Astrocyte of the cerebellum (primary cell): ENCODE measurements at regions of chr9 and their contacts with region 1.

Region 1: DNA sequence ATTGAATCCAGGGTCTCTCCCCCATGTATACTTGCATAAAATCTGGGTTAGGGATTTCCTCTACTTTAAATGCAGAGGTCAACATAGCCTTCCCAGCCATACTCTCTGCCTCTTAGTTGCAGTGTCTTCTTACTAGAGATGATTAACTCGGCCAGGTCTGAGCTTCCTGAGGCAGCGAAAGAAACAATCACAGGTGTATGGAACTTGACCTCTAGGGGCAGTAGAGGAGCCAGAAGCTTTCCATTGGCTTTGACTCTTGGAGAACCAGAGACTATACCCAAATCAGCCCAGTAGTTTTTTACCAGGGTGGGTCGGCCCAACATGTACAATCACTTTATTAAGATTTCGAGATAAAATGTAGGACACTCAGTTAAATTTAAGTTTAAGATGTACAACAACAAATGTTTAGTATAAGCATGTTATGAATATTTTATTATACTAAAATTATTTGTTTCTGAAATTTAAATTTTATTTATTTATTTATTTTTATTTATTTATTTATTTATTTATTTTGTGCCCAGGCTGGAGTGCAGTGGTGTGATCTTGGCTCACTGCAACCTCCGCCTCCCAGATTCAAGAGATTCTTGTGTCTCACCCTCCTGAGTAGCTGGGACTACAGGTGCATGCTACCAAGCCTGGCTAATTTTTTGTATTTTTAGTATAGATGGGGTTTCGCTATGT is 48.0 kb upstream of the DMRT3 start:
- DNase-seq: no peak
- H3K4me3 ChIP-seq: no peak overlapping the region
- CTCF ChIP-seq: peak; percentile 43

Region 2: DNA sequence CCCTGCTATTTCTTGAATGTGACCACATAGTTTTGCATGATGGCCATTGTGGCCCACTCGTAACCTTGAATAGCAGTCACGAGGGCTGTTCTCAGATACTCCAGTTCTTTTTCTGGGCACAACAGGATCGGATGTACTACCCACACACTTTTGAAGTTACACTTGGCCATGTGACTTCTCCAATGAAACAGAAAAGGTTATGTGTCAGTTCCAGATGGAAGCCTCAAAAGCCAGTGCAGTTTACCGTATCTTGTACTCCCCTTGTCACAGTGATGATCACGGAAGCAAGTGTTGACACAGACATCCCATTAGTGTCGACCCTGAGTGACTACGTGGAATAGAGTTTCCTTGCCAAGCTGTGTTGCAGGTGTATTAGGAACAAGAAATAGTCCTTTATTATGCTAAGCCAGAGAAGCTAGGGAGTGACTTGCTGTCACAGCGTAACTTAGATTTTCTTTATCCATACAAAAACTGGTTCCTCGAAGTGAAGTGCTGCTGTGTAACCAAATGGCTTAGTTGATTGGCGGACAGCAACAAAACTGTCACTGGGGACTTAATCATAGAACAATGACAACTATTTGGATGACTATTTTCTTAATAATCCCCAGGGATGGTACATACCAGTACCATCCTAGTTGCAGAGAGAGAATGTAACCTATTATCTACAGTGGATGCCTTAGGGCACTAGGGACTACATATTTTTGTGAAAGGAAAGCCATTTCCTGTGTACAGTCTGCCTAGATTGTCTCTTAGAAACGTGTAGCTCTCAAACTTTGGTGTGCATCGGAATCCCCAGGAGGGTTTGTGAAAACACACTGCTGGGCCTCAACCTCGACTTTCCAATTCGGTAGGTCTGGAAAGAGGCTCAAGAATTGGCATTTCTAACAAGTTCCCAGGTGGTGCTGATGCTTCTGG is 177.1 kb before region 1 on chr9:
- in situ Hi-C with region 1: no loop called
- DNase-seq: no peak
- H3K4me3 ChIP-seq: no peak overlapping the region
- CTCF ChIP-seq: no peak

Region 3: DNA sequence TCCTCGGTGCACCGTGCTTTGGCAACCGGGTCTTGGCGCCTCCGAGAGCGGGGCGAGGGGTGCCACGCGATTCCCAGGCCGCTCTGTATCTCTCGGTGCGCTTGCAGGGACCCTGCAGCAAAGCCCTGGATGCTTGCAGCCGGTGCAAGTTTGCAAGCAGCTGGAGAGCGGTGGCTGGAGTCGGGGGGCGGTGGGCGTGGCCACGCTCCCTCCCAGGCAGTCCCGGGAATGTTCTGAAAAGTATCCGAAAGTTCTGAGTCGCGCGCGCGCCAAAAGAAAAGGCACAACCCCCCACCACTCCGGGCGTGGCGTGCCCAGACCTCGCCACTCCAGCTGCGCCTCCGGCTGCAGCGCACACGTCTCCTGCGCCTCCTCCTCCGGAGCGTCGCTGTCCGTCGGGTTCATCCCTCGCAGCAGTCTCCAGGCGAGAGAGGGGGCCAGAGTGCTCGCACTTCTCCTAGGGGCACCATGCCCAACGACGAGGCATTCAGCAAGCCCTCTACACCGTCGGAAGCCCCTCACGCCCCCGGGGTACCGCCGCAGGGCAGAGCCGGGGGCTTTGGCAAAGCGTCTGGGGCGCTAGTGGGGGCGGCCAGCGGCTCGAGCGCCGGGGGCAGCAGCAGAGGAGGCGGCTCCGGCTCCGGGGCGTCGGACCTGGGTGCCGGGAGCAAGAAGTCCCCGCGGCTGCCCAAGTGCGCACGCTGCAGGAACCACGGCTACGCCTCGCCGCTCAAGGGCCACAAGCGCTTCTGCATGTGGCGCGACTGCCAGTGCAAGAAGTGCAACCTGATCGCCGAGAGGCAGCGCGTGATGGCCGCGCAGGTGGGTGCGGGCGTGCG is 86.9 kb before region 1 on chr9 and contains the start of gene DMRT1:
- in situ Hi-C with region 1: loop called (anchors 5 kb)
- DNase-seq: no peak
- H3K4me3 ChIP-seq: no peak within 1 kb of the TSS
- CTCF ChIP-seq: no peak